ENCODE measurements at regions of chr2 and their contacts with region 1.

Region 1: GRCh38 chr2:101770726-101771125 is 73.2 kb downstream of the MAP4K4 start:
- DNase-seq: peak; percentile 82
- ATAC-seq: peak; percentile 17
- H3K4me3 ChIP-seq: no peak overlapping the region; a peak in 1 of 6 replicates
- H3K27ac ChIP-seq: peak overlapping the region; percentile 65
- H3K4me1 ChIP-seq: peaks cover 100% of the 10 kb centered on the region
- H3K27me3 ChIP-seq: no peaks in the 10 kb centered on the region
- CTCF ChIP-seq: peak; percentile 80
- EP300 ChIP-seq: no peak
- POLR2A ChIP-seq: no peak
- RAD21 ChIP-seq: peak; percentile 58; the same call in 1 of the 2 replicates

Region 2: DNA sequence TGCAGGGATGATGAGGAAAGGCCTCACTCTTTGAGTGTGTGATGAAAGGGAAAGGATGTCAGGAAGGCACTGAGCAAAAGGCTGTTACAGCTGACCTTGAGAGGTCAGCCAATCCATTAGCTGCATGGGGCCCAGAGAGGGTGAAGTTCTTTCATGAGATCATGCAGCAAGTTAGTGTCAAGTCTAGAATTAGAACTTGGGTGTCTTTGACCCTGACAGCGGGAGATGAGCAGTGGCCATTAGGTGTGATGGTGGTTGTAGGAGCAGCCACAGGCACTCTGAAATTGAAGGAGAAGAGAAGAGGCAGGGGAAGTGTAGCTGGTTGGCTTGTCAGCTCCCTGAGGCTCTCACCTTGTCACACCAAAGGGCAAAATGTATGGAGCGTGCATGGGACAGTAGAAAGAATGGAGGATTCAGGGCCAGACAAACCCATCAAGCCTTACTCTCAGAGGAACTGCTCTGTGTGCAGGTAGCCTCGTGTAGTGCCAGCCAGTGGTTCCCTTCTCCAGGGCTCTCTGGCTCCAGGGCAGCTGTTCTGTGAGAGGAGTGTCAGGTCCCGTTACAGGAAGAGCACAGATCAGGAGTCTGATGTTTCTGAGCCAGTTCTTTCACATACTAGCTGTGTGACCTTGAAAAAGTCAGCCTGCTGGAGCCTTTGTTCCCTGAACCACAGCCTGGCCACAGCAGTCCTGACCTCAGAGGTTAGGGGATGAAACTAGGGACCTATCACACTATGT is 37.3 kb before region 1 on chr2:
- CTCF ChIA-PET with region 1: no interaction called
- POLR2A ChIA-PET with region 1: interaction called, 21 read pairs
- in situ Hi-C with region 1: no loop called
- intact Hi-C with region 1: loop called (anchors 2 kb)
- DNase-seq: peak; percentile 94
- ATAC-seq: peak; percentile 89
- H3K4me3 ChIP-seq: peak overlapping the region in 1 of 3 experiments; percentile 55; a peak in 2 of 6 replicates
- H3K27ac ChIP-seq: peak overlapping the region; percentile 90
- H3K4me1 ChIP-seq: peaks cover 100% of the 10 kb centered on the region
- H3K27me3 ChIP-seq: no peaks in the 10 kb centered on the region
- CTCF ChIP-seq: peak; percentile 23; the same call in 1 of the 2 replicates
- EP300 ChIP-seq: peak in 1 of 2 experiments; percentile 84; a peak in 3 of 4 replicates
- POLR2A ChIP-seq: peak; percentile 69 to 84; a peak in 3 of 4 replicates
- RAD21 ChIP-seq: peak; percentile 74

Region 3: GRCh38 chr2:101793277-101793969 is 22.7 kb after region 1 on chr2:
- CTCF ChIA-PET with region 1: no interaction called
- POLR2A ChIA-PET with region 1: interaction called, 3 read pairs
- in situ Hi-C with region 1: no loop called
- intact Hi-C with region 1: loop called (anchors 2 kb)
- DNase-seq: peak; percentile 37
- ATAC-seq: peak; percentile 60
- H3K4me3 ChIP-seq: no peak overlapping the region
- H3K27ac ChIP-seq: no peak overlapping the region
- H3K4me1 ChIP-seq: peaks cover 57% of the 10 kb centered on the region
- H3K27me3 ChIP-seq: no peaks in the 10 kb centered on the region
- CTCF ChIP-seq: peak; percentile 39
- EP300 ChIP-seq: no peak
- POLR2A ChIP-seq: no peak
- RAD21 ChIP-seq: no peak

Region 4: GRCh38 chr2:101823347-101823791 is 52.6 kb after region 1 on chr2:
- CTCF ChIA-PET with region 1: interaction called, 9 read pairs
- POLR2A ChIA-PET with region 1: interaction called, 3 read pairs
- in situ Hi-C with region 1: no loop called
- intact Hi-C with region 1: loop called (anchors 2 kb)
- DNase-seq: peak; percentile 71
- ATAC-seq: peak; percentile 80
- H3K4me3 ChIP-seq: no peak overlapping the region
- H3K27ac ChIP-seq: peak overlapping the region; percentile 31
- H3K4me1 ChIP-seq: peaks cover 70% of the 10 kb centered on the region
- H3K27me3 ChIP-seq: no peaks in the 10 kb centered on the region
- CTCF ChIP-seq: peak; percentile 87
- EP300 ChIP-seq: no peak
- POLR2A ChIP-seq: no peak
- RAD21 ChIP-seq: peak; percentile 47; the same call in 1 of the 2 replicates

Measured in HepG2 (cell line).